ENCODE measurements at regions of chr4 and their contacts with region 1.

Region 1: DNA sequence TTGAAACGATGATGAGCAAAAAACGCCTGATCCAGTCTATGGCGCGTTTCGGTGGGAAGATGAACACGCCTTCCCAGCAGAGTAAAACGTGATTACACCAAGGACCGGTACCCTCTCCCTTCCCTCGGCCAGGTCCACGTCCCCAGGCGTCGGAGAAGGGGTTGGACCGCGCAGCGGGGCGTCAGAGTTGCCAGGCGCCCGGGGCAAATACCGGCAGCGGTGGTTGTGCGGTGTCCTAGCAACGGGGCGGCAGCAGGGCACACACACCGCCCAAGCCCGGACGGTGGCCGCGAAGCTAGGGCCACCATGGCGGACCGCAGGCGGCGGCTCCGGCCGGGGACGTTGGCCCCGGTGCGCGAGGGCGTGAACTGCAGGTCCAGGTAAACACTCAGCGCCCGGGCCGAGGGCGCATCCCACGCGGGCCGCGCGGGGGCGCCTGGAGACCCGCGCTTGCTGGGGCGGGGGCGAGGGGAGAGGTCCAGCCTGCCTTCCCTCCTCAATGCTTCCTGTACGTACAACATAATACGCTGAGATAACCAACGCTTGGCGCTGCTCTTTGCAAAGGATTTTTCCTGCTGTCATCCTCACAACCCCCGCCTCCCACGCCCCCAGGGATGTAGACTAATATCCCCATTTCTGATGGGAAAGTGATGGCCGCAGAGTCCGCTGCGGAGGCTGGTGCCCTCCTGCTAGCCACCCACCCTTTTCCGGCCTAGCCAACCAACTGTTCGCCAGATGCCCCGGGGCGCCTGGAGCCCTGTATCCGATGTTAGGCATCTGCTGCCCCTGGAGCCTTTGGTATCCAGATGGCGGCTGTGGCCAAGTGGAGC is at the start of gene FAM47E:
- DNase-seq: peak; percentile 67 to 86
- H3K4me3 ChIP-seq: peak within 1 kb of the TSS; percentile 73
- H3K27ac ChIP-seq: no peak within 1 kb of the TSS
- H3K4me1 ChIP-seq: peaks cover 5% of the 10 kb centered on the region; the same call in 1 of the 2 replicates
- H3K27me3 ChIP-seq: no peaks in the 10 kb centered on the region
- CTCF ChIP-seq: peak; percentile 53
- total RNA-seq, gene FAM47E: 2.2 and 2.5 TPM in 2 replicates

Region 2: DNA sequence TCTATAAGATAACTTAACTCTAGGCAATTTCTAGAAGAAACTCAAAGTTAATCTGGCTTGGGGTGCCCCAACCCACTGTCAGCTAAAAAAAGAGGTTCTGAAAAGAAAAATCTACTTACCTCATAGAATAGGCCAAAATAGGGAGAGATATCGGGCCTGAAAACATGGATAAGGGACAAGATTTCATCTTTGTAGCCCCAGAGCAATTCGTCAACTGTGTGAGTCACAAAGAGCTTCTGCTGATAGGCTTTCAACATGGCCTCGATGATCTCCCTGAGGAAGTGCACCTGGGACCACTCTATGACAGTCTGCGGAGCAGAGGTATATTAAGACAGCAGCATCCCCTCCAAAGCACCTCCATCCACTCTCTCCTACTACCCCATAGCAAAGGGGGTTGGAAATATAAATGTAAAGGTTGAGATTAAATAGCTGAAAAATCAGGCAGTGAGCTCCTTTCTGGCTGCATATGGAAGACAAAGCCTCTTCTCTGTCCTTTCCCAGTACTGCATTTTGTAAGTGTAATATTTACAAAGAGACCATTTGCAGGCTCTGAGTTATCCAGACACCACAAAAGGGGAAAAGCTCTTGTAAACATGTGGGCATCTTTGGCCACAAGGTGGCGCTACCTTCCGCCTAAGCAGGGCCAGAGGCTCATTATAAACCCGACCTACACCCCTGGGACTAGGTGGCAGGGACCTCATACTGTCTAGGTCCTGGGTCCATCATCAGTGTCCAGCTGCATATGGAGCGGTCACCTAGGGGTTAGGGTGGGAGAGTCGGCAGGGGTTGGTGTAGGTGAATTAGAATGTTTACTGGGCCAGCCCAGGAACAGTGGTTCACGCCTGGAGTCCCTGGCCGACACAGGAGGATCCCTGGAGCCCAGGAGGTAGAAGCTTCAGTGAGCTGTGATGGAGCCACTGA is 72.0 kb before region 1 on chr4:
- CTCF ChIA-PET with region 1: interaction called, 3 read pairs
- POLR2A ChIA-PET with region 1: no interaction called
- intact Hi-C with region 1: loop called (anchors 1 kb)
- DNase-seq: peak in 1 of 2 experiments; percentile 64
- H3K4me3 ChIP-seq: no peak overlapping the region
- H3K27ac ChIP-seq: no peak overlapping the region
- H3K4me1 ChIP-seq: no peaks in the 10 kb centered on the region
- H3K27me3 ChIP-seq: no peaks in the 10 kb centered on the region
- CTCF ChIP-seq: peak; percentile 87

Region 3: DNA sequence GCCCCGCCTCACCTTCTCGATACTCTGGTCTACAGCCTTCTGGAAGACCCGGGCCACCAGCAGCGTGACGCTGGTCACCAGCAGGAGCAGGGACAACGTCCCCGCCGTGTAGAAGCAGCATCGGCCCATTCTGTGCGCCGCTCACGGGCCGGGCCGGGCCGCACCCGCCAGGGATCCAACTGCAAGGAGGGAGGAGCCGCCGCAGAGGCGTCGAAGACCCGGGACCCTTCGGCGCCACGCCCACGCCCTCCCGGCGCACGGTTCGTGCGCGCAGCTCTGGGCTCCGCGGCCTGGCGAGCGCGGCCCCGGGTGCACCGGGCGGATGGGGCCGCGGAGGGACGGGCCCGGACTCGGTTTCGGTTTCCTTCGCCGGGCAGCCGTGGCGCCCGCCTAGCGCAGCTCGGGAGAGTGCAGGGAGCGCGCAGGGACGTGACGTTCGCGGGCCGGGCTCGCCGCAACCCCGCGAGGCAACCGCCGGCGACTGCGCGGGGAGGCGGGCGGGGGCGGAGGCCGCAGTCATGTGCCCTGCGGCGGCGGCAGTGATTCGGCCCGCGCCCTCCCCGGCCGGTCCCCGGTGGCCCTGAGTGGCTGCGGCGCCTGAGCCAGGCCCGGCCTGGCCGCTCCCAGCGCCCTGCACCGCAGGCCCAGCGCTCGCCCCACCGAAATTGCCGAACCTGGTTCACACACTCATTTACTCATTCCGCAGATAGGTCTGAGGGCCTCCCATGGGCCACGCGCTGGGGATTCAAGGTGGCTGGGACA is 38.1 kb before region 1 on chr4 and contains the start of gene SCARB2:
- CTCF ChIA-PET with region 1: no interaction called
- POLR2A ChIA-PET with region 1: no interaction called
- intact Hi-C with region 1: loop called (anchors 1 kb)
- DNase-seq: peak; percentile 58 to 84
- H3K4me3 ChIP-seq: peak within 1 kb of the TSS; percentile 81
- H3K27ac ChIP-seq: peak within 1 kb of the TSS; percentile 89
- H3K4me1 ChIP-seq: peaks cover 49% of the 10 kb centered on the region
- H3K27me3 ChIP-seq: no peaks in the 10 kb centered on the region
- CTCF ChIP-seq: no peak
- total RNA-seq, gene SCARB2: 37.6 and 64.7 TPM in 2 replicates

Region 4: GRCh38 chr4:76305971-76306881 is 54.6 kb after region 1 on chr4 and contains the start of gene STBD1:
- CTCF ChIA-PET with region 1: no interaction called
- POLR2A ChIA-PET with region 1: interaction called, 6 read pairs
- intact Hi-C with region 1: loop called (anchors 5 kb)
- DNase-seq: peak; percentile 54 to 73
- H3K4me3 ChIP-seq: peak within 1 kb of the TSS; percentile 87
- H3K27ac ChIP-seq: peak within 1 kb of the TSS; percentile 58
- H3K4me1 ChIP-seq: peaks cover 20% of the 10 kb centered on the region
- H3K27me3 ChIP-seq: no peaks in the 10 kb centered on the region
- CTCF ChIP-seq: no peak
- total RNA-seq, gene STBD1: 1.8 and 3.5 TPM in 2 replicates

Measured in PC-9 (cell line).